ENCODE measurements at regions of chr7 and their contacts with region 1.

Region 1: DNA sequence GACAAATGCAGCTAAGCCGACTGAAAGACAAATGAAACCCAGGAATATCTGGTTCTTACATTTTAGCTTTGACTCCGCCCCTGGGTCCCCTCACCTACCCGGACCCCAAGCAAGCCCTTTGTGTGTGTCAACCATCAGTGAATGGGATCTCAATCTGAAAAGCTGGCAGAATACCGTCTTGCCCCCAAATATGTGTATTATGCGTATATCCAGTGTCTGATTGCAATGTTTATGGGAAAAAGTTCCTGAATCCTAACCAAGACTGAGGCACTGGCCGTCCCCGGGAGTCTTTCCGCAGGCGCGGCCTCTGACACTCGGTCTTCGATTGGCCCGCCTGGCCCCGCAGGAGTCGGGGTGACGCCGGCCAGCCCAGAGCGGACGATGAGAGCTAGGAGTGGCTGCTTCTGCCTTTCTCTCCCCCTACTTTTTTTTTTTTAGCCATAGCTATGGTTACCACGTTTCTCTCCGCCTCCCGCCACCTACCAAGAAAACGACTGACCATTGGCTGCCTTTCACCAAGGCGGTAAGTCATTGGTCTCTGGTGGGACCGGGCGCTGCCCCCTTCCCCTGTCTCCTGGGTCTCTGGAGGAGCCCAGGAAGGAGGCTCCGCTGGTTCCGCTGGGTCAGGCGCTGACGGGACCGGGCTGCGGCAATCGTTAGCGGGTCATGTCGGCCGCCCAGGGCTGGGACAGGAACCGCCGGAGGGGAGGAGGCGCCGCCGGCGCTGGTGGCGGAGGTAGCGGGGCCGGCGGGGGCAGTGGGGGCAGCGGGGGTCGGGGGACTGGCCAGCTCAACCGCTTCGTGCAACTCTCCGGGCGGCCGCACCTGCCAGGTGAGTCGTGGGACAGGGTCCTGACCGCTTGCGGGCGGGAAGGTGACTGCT is at the start of gene KLHDC10:
- DNase-seq: peak; percentile 93 to 99
- H3K4me3 ChIP-seq: peak within 1 kb of the TSS; percentile 93 to 99
- H3K27ac ChIP-seq: peak within 1 kb of the TSS; percentile 75 to 85
- H3K4me1 ChIP-seq: peaks cover 0 to 19% of the 10 kb centered on the region in 2 donors
- H3K27me3 ChIP-seq: no peaks in the 10 kb centered on the region
- CTCF ChIP-seq: no peak
- total RNA-seq, gene KLHDC10: 13.0 TPM

Region 2: GRCh38 chr7:130040576-130040975 is 29.6 kb before region 1 on chr7:
- intact Hi-C with region 1: no loop called
- DNase-seq: no peak
- H3K4me3 ChIP-seq: no peak overlapping the region
- H3K27ac ChIP-seq: no peak overlapping the region
- H3K4me1 ChIP-seq: no peaks in the 10 kb centered on the region
- H3K27me3 ChIP-seq: no peaks in the 10 kb centered on the region
- CTCF ChIP-seq: no peak

Region 3: GRCh38 chr7:130050773-130051125 is 19.5 kb before region 1 on chr7:
- intact Hi-C with region 1: loop called (anchors 2 kb)
- DNase-seq: no peak
- H3K4me3 ChIP-seq: peak overlapping the region; percentile 60 to 76
- H3K27ac ChIP-seq: peak overlapping the region; percentile 59 to 65
- H3K4me1 ChIP-seq: peaks cover 0 to 9% of the 10 kb centered on the region in 2 donors
- H3K27me3 ChIP-seq: no peaks in the 10 kb centered on the region
- CTCF ChIP-seq: no peak

Region 4: GRCh38 chr7:130154501-130155317 is 84.5 kb after region 1 on chr7:
- intact Hi-C with region 1: no loop called
- DNase-seq: peak in 1 of 2 donors; percentile 53
- H3K4me3 ChIP-seq: no peak overlapping the region
- H3K27ac ChIP-seq: no peak overlapping the region
- H3K4me1 ChIP-seq: no peaks in the 10 kb centered on the region
- H3K27me3 ChIP-seq: no peaks in the 10 kb centered on the region
- CTCF ChIP-seq: no peak

Region 5: DNA sequence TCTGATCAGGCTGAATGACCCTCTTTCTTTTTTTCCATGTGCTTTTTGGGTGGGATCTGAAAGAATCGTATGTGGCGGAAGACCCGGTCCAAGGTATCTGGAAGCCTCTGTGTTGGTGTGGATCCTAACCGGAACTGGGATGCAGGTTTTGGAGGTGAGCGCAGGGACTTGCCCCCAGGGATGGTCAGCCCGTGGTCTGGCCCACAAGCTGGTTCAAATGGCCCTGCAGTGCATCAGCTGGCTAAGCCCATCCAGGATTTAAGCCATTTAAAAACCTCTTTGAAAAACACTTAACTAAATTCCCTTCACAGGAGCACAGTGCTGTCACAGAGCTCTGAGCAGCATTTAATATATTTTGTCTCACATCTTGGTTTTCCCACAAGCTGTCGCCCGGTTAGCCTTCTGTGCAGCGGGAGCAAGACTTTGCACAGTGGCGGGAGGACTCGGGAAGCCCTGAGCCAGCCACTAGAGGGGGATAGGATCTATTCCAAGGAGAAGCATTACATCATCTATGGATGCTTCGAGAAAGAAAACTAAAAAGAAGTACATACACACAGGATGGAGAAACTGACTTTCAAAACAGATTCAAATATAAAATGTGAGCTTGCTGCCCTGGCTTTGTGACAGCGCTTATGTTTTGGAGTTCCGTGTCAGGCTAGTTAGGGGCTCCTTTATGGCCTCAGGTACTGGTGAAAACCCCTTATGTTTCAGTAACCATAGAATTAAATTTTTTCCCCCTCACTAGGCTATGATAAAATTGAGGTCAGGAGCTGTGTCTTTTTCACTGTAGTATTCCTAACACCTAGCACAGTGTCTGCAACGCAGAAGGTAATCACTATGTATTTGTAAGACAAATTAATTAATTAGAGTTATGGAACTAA is 207.8 kb after region 1 on chr7:
- intact Hi-C with region 1: loop called (anchors 5 kb)
- DNase-seq: peak in 1 of 2 donors; percentile 78
- H3K4me3 ChIP-seq: no peak overlapping the region
- H3K27ac ChIP-seq: peak overlapping the region in 1 of 2 donors; percentile 11
- H3K4me1 ChIP-seq: peaks cover 4 to 5% of the 10 kb centered on the region in 2 donors
- H3K27me3 ChIP-seq: no peaks in the 10 kb centered on the region
- CTCF ChIP-seq: peak; percentile 45 to 73 (median 66)

Region 6: GRCh38 chr7:130721486-130722280 is 651.5 kb after region 1 on chr7:
- intact Hi-C with region 1: loop called (anchors 5 kb)
- DNase-seq: peak in 1 of 2 donors; percentile 70
- H3K4me3 ChIP-seq: no peak overlapping the region
- H3K27ac ChIP-seq: no peak overlapping the region
- H3K4me1 ChIP-seq: no peaks in the 10 kb centered on the region
- H3K27me3 ChIP-seq: no peaks in the 10 kb centered on the region
- CTCF ChIP-seq: peak; percentile 27 to 63 (median 41)

Measured in ascending aorta (tissue), 2 donors.